SK-N-SH (cell line): ENCODE measurements at regions of chr12 and their contacts with region 1.

Region 1: DNA sequence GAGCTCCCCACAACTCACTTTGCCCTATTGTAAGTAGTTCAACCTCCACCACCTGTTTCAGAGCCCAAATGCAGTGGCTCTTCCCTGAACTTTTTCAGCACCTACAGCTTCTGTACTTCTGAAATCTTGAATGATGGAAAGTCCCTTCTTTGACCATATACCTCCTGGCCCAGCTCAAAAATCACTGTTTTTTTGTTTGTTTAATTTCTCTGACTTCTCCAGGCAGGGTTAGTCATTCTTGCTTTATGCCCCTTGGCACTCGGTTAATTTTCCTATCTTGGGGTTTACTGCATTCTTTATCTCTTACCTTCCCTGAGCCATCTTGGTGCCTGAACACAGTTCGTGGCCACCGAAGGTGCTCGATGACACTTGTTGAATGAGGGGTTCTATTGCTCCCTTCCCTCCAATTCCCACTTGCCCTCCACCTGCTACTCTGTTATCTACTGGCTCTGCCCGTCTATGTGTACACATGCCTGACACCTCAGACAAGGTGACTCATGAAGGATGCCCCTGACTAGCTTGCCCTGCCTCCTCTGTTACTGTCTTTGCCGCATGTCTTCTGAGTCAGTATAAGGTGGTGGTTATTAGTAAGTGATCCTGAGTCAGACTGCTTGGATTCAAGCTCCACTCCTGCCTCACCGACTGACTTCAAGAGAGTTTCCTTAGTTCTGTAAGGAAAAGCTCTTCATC is 4.4 kb downstream of the AMHR2 start:
- DNase-seq: no peak
- H3K4me3 ChIP-seq: no peak overlapping the region
- H3K27ac ChIP-seq: no peak overlapping the region
- H3K4me1 ChIP-seq: peaks cover 8 to 11% of the 10 kb centered on the region in 2 experiments; a peak in 3 of 4 replicates
- H3K27me3 ChIP-seq: no peaks in the 10 kb centered on the region
- CTCF ChIP-seq: no peak
- EP300 ChIP-seq: no peak
- RAD21 ChIP-seq: no peak

Region 2: DNA sequence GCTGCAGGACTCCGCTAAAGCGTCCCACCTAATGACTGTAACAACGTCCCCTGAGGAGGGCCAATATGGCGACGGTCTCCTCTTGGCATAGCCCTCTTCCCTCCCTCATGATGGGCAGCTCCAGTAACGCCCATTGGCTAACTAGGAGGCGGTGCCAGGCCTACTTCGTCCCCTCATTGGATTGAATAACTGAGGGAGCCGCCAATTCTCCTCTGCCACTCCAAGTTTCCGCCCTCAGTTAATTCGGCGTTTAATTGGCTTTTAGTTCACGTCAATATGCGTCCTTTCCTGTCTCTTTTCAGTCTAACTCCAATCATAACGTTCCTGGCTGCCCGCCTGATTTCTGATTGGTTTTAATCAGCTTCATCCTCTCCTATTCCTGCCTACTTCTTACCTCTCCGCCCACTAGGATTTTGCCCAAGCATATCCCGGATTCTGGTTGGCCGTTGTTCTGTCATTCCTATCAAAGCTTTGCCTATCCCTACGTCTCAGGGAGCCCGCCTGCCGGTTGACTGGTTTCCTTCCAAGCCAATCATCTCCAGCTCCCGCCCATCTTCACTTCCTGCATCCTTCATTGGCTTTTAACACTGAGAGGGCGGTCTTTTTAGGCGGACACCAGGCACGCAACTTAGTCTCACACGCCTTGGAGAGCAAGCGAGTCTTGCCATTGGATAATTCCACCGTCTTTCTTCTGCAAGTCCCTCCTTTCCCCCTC is 48.5 kb before region 1 on chr12:
- CTCF ChIA-PET with region 1: interaction called, 53 read pairs
- POLR2A ChIA-PET with region 1: no interaction called
- DNase-seq: peak; percentile 91
- H3K4me3 ChIP-seq: peak overlapping the region; percentile 52 to 59
- H3K27ac ChIP-seq: peak overlapping the region; percentile 89 to 96
- H3K4me1 ChIP-seq: peaks cover 29 to 32% of the 10 kb centered on the region in 2 experiments
- H3K27me3 ChIP-seq: no peaks in the 10 kb centered on the region
- CTCF ChIP-seq: no peak
- EP300 ChIP-seq: no peak
- RAD21 ChIP-seq: no peak

Region 3: GRCh38 chr12:53402871-53403270 is 25.2 kb before region 1 on chr12:
- CTCF ChIA-PET with region 1: no interaction called
- POLR2A ChIA-PET with region 1: no interaction called
- DNase-seq: no peak
- H3K4me3 ChIP-seq: no peak overlapping the region
- H3K27ac ChIP-seq: no peak overlapping the region
- H3K4me1 ChIP-seq: 0 out of 4 replicates have a peak, but pooled peaks cover 0 to 6% of the 10 kb centered on the region in 2 experiments
- H3K27me3 ChIP-seq: no peaks in the 10 kb centered on the region
- CTCF ChIP-seq: no peak
- EP300 ChIP-seq: no peak
- RAD21 ChIP-seq: no peak

Region 4: DNA sequence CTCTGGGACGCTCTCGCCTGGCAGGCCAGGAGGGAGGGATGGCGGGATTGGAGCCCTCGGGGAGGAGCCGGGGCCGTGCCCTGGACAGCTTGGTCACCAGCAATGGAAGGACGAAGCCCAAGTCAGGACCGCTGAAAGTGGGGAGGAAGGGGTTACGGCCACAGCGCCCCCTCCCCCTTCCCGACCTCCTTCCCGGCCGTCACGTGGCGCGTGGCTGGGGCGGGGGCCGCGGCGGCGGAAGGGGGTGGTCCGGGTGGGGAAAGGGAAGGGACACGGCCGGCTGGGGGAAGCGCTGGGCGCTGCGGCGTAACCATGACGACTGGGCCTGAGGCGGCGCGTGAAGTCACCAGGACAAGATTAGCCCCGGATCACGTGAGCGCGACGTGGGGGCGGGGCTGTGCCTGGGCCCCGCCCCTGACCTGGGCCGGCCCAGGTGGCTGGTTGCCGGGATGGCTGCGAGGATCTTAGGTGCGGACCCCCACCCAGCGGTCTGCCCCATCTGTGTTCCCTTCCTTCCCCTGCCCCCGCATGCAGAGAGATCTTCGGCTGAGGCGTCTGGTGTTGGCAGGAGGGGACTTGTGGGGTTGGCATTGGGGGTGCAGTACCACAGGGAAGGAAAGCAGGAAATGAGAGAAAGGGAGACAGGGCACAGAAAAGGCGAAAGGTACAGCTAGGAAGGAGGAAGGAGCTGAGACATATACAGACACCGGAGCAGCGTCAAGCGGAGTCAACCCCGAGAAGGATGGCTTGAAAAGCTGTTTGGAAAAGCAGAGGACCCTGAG is 65.0 kb after region 1 on chr12:
- CTCF ChIA-PET with region 1: no interaction called
- POLR2A ChIA-PET with region 1: no interaction called
- DNase-seq: peak; percentile 97
- H3K4me3 ChIP-seq: peak overlapping the region; percentile 47 to 57
- H3K27ac ChIP-seq: peak overlapping the region; percentile 63 to 94
- H3K4me1 ChIP-seq: peaks cover 24 to 36% of the 10 kb centered on the region in 2 experiments
- H3K27me3 ChIP-seq: no peaks in the 10 kb centered on the region
- CTCF ChIP-seq: no peak; the same call in 1 of the 2 replicates
- EP300 ChIP-seq: peak in 1 of 2 experiments; percentile 50; a peak in 2 of 4 replicates
- RAD21 ChIP-seq: no peak

Region 5: GRCh38 chr12:53871362-53871761 is 443.3 kb after region 1 on chr12:
- CTCF ChIA-PET with region 1: no interaction called
- POLR2A ChIA-PET with region 1: no interaction called
- DNase-seq: no peak
- H3K4me3 ChIP-seq: no peak overlapping the region
- H3K27ac ChIP-seq: no peak overlapping the region
- H3K4me1 ChIP-seq: no peaks in the 10 kb centered on the region
- H3K27me3 ChIP-seq: peaks cover 27% of the 10 kb centered on the region; the same call in 1 of the 2 replicates
- CTCF ChIP-seq: no peak
- EP300 ChIP-seq: no peak
- RAD21 ChIP-seq: no peak